ENCODE measurements at regions of chr20 and their contacts with region 1.

Region 1: DNA sequence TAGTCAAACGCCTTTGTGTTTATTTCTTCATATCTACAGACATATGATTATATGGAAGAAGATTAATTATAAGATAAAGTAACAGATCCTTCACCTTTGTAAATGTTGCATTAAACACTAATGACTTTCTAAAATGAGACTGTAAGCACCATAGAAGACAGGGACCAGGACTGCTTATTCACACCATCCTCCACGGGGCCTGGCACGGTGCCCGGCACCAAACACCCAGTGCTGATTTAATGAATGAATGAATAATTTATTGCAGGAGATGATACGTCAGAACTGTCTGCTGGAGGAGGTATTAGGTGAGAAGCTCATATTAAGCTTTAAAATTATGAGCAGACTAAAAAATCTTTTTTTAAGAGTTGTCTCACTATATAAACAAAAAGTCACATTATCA is 88.3 kb downstream of the SLX4IP start:
- DNase-seq: no peak
- H3K4me3 ChIP-seq: no peak overlapping the region
- H3K27ac ChIP-seq: peak overlapping the region; percentile 58 to 78 (median 68)
- H3K4me1 ChIP-seq: peaks cover 2 to 28% (median 10%) of the 10 kb centered on the region in 4 donors
- H3K27me3 ChIP-seq: no peaks in the 10 kb centered on the region
- CTCF ChIP-seq: no peak
- EP300 ChIP-seq: no peak
- POLR2A ChIP-seq: no peak

Region 2: DNA sequence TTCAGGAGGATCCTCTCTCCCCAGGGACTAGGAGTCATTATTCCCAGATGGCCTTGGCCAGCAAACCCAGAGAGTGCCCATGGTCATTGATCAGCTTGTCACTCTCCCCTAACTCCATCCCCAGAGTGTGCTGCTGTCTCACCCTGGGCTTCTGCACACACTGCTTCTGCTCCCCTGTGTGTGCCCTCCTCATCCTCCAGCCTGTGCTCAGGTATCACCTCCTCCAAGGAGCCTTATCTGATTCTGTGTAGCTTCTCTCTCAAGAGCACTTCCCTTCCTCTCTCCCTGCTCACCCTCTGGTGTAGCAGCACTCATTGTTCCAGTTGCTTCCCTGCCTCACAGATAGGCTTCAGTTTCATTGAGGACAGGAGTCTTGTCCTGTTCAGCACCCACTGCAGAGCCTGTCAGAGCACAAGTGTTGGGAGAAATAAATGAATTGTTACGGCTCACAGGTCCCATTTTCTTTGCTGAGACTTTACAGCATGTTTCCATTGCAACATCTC is 47.9 kb after region 1 on chr20:
- in situ Hi-C with region 1: no loop called
- intact Hi-C with region 1: loop called (anchors 2 kb)
- DNase-seq: no peak
- H3K4me3 ChIP-seq: no peak overlapping the region
- H3K27ac ChIP-seq: no peak overlapping the region
- H3K4me1 ChIP-seq: peaks cover 0 to 4% (median 0%) of the 10 kb centered on the region in 4 donors
- H3K27me3 ChIP-seq: no peaks in the 10 kb centered on the region
- CTCF ChIP-seq: no peak
- EP300 ChIP-seq: no peak
- POLR2A ChIP-seq: no peak